ENCODE measurements at regions of chr7 and their contacts with region 1.

Region 1: GRCh38 chr7:100611974-100612729 is at the start of gene MOSPD3:
- DNase-seq: peak; percentile 98 to 99 (median 98)
- H3K4me3 ChIP-seq: peak within 1 kb of the TSS; percentile 60 to 91 (median 64)
- H3K4me3 Mint-ChIP-seq: peak within 1 kb of the TSS; percentile 93 to 97
- H3K27ac ChIP-seq: peak within 1 kb of the TSS; percentile 66 to 95
- H3K27ac Mint-ChIP-seq: peak within 1 kb of the TSS; percentile 97 to 100 (median 99)
- H3K4me1 ChIP-seq: peaks cover 22 to 27% of the 10 kb centered on the region in 2 donors
- H3K4me1 Mint-ChIP-seq: peaks cover 19% of the 10 kb centered on the region
- H3K27me3 ChIP-seq: no peaks in the 10 kb centered on the region
- H3K27me3 Mint-ChIP-seq: peaks cover 2 to 10% (median 8%) of the 10 kb centered on the region in 3 donors
- CTCF ChIP-seq: no peak
- polyA plus RNA-seq, gene MOSPD3: 12.7 to 15.5 (median 13.3) TPM

Region 2: GRCh38 chr7:100538654-100539435 is 73.3 kb before region 1 on chr7 and contains the start of gene AGFG2:
- intact Hi-C with region 1: loop called in 1 of 2 experiments (anchors 2 kb)
- DNase-seq: peak; percentile 99 to 100 (median 99)
- H3K4me3 ChIP-seq: peak within 1 kb of the TSS; percentile 56 to 85 (median 57)
- H3K4me3 Mint-ChIP-seq: peak within 1 kb of the TSS; percentile 91 to 96
- H3K27ac ChIP-seq: peak within 1 kb of the TSS in 1 of 2 donors; percentile 58
- H3K27ac Mint-ChIP-seq: peak within 1 kb of the TSS in 6 of 7 donors; percentile 24 to 89 (median 60)
- H3K4me1 ChIP-seq: peaks cover 14 to 18% of the 10 kb centered on the region in 2 donors
- H3K4me1 Mint-ChIP-seq: peaks cover 13% of the 10 kb centered on the region
- H3K27me3 ChIP-seq: no peaks in the 10 kb centered on the region
- H3K27me3 Mint-ChIP-seq: peaks cover 0 to 5% (median 0%) of the 10 kb centered on the region in 3 donors
- CTCF ChIP-seq: no peak
- polyA plus RNA-seq, gene AGFG2: 1.3 to 1.8 (median 1.8) TPM

Region 3: GRCh38 chr7:100556541-100556940 is 55.6 kb before region 1 on chr7:
- intact Hi-C with region 1: no loop called
- DNase-seq: peak; percentile 32 to 66 (median 52)
- H3K4me3 ChIP-seq: no peak overlapping the region
- H3K4me3 Mint-ChIP-seq: no peak overlapping the region
- H3K27ac ChIP-seq: peak overlapping the region in 1 of 2 donors; percentile 58
- H3K27ac Mint-ChIP-seq: peak overlapping the region; percentile 3 to 89 (median 66)
- H3K4me1 ChIP-seq: peaks cover 27 to 34% of the 10 kb centered on the region in 2 donors
- H3K4me1 Mint-ChIP-seq: peaks cover 30% of the 10 kb centered on the region
- H3K27me3 ChIP-seq: no peaks in the 10 kb centered on the region
- H3K27me3 Mint-ChIP-seq: no peaks in the 10 kb centered on the region
- CTCF ChIP-seq: no peak

Region 4: DNA sequence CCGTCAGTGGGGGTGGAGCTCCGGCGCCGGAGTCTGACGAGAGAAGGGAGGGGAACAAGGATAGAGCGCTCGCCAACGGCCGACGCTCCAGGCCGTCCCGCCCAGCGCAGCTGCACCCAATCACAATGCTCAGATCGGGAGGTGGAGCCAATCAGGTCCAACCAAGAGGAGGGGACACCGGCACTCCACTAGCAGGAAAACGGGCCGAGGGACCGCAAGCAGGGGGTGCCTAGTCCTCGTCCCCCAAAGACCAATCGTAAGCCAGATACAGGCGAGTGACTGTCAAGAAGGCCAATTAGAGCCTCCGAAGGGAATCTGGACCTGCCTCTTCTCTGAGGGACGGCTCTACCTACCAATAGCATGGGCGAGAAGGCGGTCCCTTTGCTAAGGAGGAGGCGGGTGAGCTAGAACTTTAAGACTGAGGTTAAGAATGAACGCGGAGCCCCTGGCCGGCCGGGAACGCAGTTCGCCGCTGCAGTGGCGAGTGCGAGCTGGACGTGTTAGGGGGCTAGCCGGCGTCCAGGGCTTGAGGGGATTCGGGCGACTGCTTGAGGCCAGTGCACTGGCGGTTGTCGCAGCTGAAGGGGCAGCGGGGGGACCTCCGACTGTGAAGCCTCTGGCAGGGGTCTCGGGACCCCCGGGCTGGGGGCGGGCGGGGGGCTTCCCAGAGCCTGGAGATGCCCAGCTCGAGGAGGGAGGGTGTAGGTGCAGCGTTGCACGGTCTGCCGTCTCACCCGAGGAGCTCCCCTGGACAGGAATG is 25.7 kb before region 1 on chr7 and contains the start of gene FBXO24:
- intact Hi-C with region 1: loop called (anchors 1 to 2 kb)
- DNase-seq: peak; percentile 100
- H3K4me3 ChIP-seq: peak within 1 kb of the TSS; percentile 77 to 100 (median 93)
- H3K4me3 Mint-ChIP-seq: peak within 1 kb of the TSS; percentile 93 to 99
- H3K27ac ChIP-seq: peak within 1 kb of the TSS; percentile 84 to 88
- H3K27ac Mint-ChIP-seq: peak within 1 kb of the TSS; percentile 93 to 98 (median 98)
- H3K4me1 ChIP-seq: peaks cover 40 to 52% of the 10 kb centered on the region in 2 donors
- H3K4me1 Mint-ChIP-seq: peaks cover 48% of the 10 kb centered on the region
- H3K27me3 ChIP-seq: peaks cover 0 to 14% of the 10 kb centered on the region in 2 donors
- H3K27me3 Mint-ChIP-seq: peaks cover 11 to 23% (median 17%) of the 10 kb centered on the region in 3 donors
- CTCF ChIP-seq: no peak
- polyA plus RNA-seq, gene FBXO24: 0.42 to 1.2 (median 0.69) TPM

Region 5: DNA sequence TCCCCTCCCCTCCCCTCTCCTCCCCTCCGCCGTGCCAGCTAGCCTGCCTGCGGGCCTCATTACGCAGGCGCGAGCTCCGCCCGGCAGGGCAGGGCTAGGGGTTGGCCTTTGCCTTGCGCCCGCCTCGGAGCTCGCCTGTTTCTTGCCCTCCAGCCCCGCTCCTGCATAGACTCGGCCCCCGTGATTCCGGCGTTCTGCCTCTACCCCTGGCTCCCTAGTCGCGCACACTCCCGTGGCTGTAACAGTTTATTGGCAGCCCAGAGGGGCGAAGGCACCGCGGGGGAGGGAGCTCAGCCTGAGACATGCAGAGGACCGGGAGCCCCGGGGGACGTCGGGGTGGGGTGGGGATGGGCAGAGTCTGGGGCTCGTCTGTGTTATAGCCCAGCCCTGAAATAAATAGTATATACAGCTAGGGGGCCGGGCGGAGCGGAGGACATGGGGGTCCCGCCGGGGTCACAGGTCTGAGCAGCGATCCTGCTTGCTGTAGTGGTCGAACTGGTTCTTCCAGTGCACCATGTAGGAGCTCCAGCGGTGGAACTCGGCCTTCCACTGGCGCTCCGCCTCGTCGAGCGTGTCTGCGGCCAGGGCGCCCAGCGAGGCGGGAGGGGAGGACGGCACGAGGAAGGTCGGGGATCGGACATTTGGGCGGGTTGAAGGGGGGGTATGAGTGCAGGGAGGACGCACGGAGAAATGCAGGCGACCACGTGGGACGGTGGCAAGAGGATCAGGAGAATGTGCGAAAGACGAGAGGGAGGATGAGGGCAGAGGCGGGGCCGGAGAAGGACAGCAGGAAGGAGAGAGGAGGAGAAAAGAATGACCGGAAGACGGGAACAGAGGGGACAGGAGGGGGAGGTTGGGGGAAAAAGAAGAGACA is 277.8 kb after region 1 on chr7:
- intact Hi-C with region 1: loop called in 1 of 2 experiments (anchors 5 kb)
- DNase-seq: peak; percentile 85 to 91 (median 85)
- H3K4me3 ChIP-seq: peak overlapping the region; percentile 43 to 81 (median 54)
- H3K4me3 Mint-ChIP-seq: peak overlapping the region; percentile 83 to 96
- H3K27ac ChIP-seq: peak overlapping the region in 1 of 2 donors; percentile 45
- H3K27ac Mint-ChIP-seq: peak overlapping the region in 6 of 7 donors; percentile 15 to 83 (median 50)
- H3K4me1 ChIP-seq: peaks cover 53 to 62% of the 10 kb centered on the region in 2 donors
- H3K4me1 Mint-ChIP-seq: peaks cover 52% of the 10 kb centered on the region
- H3K27me3 ChIP-seq: peaks cover 16 to 47% of the 10 kb centered on the region in 2 donors
- H3K27me3 Mint-ChIP-seq: peaks cover 37 to 51% (median 51%) of the 10 kb centered on the region in 3 donors
- CTCF ChIP-seq: no peak

Measured in CD14-positive monocyte (primary cell).